ENCODE measurements at regions of chr3 and their contacts with region 1.

Region 1: DNA sequence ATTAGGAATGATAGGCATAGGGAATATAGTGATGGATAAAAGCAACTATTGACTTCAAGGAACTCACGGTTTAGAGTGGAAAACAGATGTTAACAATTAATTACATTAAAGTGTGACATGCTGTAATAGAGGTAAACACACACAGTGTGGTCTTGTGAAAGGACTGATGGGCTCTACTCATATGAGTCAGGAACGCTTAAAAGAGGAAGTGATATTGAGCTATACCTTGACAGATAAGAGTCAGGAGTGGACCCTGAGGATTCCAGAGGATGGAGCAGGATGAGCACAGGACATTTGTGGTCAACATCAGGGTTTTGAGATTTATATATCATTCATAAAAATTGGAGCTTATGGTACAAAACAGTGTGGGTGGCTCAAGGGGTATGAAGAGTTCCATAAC is 11.0 kb downstream of the EXOG start:
- DNase-seq: no peak
- ATAC-seq: no peak
- H3K4me3 ChIP-seq: no peak overlapping the region
- H3K27ac ChIP-seq: no peak overlapping the region
- H3K4me1 ChIP-seq: no peaks in the 10 kb centered on the region
- H3K27me3 ChIP-seq: no peaks in the 10 kb centered on the region
- CTCF ChIP-seq: no peak

Region 2: DNA sequence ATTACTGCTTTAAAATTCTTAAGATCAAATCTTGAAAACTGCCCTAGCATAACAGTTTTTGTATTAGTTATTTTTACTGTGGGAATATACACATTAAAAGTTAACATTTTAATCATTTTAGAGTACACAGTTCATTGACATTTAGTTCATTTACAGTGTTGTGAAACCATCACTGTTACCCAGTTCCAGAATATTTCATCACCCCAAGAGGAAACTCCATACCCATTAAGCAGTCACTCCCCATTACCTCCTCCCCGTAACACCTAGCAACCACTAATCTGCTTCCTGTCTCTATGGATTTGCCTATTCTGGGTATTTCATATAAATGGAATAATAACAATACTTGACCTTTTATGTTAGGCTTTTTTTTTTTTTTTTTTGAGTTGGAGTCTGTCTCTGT is 1168.6 kb before region 1 on chr3:
- CTCF ChIA-PET with region 1: no interaction called
- POLR2A ChIA-PET with region 1: no interaction called
- in situ Hi-C with region 1: no loop called
- intact Hi-C with region 1: no loop called
- DNase-seq: no peak
- ATAC-seq: no peak
- H3K4me3 ChIP-seq: no peak overlapping the region
- H3K27ac ChIP-seq: no peak overlapping the region
- H3K4me1 ChIP-seq: no peaks in the 10 kb centered on the region
- H3K27me3 ChIP-seq: no peaks in the 10 kb centered on the region
- CTCF ChIP-seq: no peak

Region 3: GRCh38 chr3:38229036-38229435 is 278.1 kb before region 1 on chr3:
- CTCF ChIA-PET with region 1: no interaction called
- POLR2A ChIA-PET with region 1: interaction called, 13 read pairs
- in situ Hi-C with region 1: no loop called
- intact Hi-C with region 1: no loop called
- DNase-seq: no peak
- ATAC-seq: no peak
- H3K4me3 ChIP-seq: no peak overlapping the region
- H3K27ac ChIP-seq: no peak overlapping the region
- H3K4me1 ChIP-seq: no peaks in the 10 kb centered on the region
- H3K27me3 ChIP-seq: no peaks in the 10 kb centered on the region
- CTCF ChIP-seq: no peak

Region 4: DNA sequence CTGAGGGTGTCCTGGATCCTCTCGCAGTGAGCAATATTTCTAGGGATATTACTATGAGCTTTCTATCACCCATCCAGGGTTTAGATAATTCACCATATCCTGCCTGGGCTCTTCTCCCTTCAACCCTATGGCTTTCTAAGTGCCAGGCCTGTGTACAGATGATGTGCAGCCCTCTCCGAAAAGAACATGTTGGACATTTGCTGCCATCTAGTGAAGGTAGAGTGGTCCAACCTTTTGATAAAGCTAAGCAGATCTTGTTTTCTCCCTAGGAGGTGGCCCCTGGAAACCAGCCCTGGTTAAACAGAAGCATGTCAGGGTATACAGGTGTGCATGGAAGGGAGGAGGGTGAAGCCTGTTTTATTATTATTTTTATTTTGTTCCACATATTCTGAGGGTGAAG is 336.8 kb after region 1 on chr3:
- CTCF ChIA-PET with region 1: no interaction called
- POLR2A ChIA-PET with region 1: no interaction called
- in situ Hi-C with region 1: no loop called
- intact Hi-C with region 1: loop called (anchors 10 kb)
- DNase-seq: no peak
- ATAC-seq: no peak
- H3K4me3 ChIP-seq: no peak overlapping the region
- H3K27ac ChIP-seq: no peak overlapping the region
- H3K4me1 ChIP-seq: no peaks in the 10 kb centered on the region
- H3K27me3 ChIP-seq: no peaks in the 10 kb centered on the region
- CTCF ChIP-seq: peak; percentile 42

Measured in Panc1 (cell line).